ENCODE measurements at regions of chr1 and their contacts with region 1.

Region 1: DNA sequence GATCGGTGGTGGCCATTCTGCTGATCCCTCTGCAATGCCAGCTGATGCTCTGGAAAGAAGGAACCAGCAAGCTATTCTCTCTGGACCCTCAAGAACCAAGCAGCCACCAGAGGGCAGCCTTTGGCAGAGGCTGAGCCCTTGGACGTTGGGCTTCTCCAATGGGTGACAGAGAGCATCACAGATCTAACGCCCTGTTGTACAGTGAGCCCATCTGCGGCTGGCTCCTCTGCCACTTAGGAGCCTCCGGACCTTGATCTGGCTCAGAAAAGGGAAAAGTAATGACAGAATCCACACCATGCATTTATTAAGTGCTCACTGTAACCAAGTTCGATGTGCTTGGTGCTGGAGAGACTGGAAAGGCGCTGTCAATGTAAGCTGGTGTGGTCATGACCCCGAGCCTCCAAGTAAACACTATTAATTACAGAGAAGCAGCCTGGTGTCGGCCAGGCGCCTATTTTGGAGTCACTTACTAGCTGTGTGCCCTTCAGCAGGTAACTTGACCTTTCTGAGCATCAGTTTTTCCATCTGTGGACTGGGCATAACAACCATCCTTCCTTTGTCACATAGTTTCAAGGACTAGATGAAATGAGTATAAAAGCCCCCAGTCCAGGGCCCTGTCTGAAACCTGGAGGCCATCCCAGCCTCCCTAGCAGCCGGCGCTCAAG is 34.9 kb downstream of the ECE1 start:
- DNase-seq: peak; percentile 87
- H3K4me3 Mint-ChIP-seq: no peak overlapping the region
- H3K27ac Mint-ChIP-seq: no peak overlapping the region
- H3K4me1 Mint-ChIP-seq: peaks cover 12% of the 10 kb centered on the region
- H3K27me3 Mint-ChIP-seq: no peaks in the 10 kb centered on the region
- CTCF ChIP-seq: peak; percentile 89

Region 2: DNA sequence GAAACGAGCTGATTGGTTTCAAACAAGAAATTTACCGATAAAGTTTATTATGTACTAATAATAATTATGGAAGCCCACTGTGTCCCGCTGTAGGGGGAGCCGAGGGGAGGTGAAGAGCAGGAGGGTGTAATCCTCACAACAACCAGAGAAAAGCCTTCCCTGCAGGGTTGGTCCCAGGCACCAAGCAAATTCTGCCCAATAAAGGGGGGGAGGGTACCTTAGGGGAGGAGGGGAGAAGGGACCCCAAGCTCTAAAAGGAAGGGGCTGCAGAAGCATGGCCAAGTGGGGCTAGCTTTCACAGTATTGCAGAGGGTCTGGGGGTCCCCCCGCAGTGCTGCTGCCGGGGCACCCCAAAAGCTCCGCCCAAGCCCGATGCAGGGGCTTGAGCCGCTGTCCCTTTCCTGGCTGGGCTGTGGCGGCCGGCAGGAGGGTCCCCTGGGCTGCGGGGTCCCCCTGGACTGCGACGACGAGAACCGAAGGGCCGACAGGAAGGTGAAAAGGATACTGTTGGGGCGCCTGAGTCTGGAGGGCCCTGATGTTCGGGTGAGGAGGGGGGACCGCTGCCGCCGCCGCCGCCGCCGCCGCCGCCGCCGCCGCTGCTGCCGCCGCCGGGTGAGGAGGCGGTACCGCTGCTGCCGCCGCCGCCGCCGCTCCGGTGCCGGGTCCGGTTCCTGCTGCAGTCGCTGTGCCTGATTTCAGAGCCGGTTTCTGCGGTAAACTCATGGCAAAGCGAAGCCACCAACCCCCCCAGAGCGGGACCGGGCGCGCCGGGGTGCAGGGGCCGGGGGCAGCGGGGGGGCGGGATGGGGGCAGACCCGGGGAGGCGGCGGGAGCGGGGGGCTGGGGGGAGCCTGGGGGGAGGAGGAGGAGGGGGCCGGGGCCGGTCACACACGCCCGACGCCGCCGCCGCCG is 79.5 kb before region 1 on chr1:
- CTCF ChIA-PET with region 1: no interaction called
- POLR2A ChIA-PET with region 1: no interaction called
- intact Hi-C with region 1: no loop called
- DNase-seq: peak; percentile 25
- H3K4me3 Mint-ChIP-seq: peak overlapping the region; percentile 84
- H3K27ac Mint-ChIP-seq: peak overlapping the region; percentile 90
- H3K4me1 Mint-ChIP-seq: peaks cover 26% of the 10 kb centered on the region
- H3K27me3 Mint-ChIP-seq: no peaks in the 10 kb centered on the region
- CTCF ChIP-seq: no peak

Region 3: GRCh38 chr1:21232044-21232443 is 23.4 kb before region 1 on chr1:
- CTCF ChIA-PET with region 1: interaction called, 52 read pairs
- POLR2A ChIA-PET with region 1: interaction called, 6 read pairs
- intact Hi-C with region 1: loop called (anchors 1 kb)
- DNase-seq: peak; percentile 79
- H3K4me3 Mint-ChIP-seq: no peak overlapping the region
- H3K27ac Mint-ChIP-seq: no peak overlapping the region
- H3K4me1 Mint-ChIP-seq: no peaks in the 10 kb centered on the region
- H3K27me3 Mint-ChIP-seq: no peaks in the 10 kb centered on the region
- CTCF ChIP-seq: peak; percentile 77

Region 4: DNA sequence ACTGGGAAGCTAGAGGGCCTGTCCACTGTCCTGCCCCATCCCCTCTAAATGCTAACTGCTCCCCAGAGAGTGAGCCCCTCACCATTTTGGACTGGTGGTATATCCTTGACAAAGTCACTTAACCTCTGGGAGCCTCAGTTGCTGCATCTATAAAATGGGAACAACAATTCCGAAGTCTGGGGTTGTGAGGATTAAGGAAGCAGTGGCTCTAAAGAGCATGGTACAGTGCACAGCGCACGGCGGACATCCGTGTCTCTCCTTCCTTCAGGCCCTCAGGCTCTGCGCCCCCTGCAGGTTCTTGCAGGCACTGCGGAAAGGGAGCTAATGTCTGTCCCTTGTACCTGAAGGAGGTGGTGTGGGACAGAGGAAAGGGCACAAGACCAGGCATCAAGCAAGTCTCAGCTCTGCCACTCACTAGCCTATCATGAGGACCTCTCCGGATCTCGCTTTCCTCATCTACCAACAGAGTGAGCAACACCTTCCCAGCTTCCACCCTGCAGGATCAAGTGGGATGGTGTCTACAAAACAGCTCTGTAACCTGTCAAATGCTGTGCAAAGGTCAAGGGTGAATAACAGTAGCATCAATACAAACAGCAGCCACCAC is 14.8 kb after region 1 on chr1:
- CTCF ChIA-PET with region 1: interaction called, 16 read pairs
- POLR2A ChIA-PET with region 1: interaction called, 5 read pairs
- intact Hi-C with region 1: loop called (anchors 1 kb)
- DNase-seq: peak; percentile 71
- H3K4me3 Mint-ChIP-seq: no peak overlapping the region
- H3K27ac Mint-ChIP-seq: no peak overlapping the region
- H3K4me1 Mint-ChIP-seq: no peaks in the 10 kb centered on the region
- H3K27me3 Mint-ChIP-seq: no peaks in the 10 kb centered on the region
- CTCF ChIP-seq: peak; percentile 80

Region 5: DNA sequence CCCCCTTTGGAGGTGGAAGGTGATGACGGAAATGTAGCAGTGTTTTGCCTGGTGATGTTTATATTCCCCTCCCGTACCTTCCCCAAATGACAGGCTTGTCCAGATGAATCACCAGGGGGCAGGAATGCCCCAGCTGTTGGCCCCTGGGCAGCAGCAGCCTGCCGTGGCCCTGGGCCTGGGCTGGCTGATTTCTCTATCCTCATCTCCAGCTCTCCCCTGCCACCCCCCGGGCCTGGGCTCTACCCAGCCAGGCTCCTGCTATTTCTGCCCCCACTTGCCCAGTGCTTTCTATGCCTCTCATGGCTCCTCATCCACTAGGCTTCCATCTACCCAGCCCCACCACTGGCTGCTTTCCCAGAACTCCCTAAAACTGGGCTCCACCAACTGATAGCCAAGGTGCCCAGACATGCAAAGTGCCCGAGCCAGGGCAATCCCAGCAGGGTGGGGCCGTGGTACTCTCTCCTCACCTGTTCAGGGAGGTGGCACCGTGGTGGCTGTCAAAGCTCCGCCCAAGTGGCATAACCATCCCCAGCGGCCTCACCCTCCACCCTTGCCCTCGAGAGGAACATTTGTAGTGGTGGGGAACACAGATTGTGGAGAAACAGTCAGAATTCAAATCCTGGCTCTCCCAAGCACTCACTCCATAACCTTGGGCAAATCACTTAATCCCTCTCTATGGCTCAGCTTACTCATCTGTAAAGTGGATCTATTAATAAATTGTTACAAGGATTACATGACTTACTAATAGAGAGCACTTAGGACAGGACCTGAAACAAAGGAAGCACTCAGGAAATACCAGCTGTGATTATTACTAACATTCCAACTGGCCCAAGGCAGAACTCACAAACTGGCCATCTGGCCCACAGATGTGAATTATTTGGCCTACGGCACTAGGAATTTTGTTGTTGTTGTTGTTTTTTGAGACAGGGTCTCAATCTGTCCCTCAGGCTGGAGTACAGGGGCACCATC is 47.6 kb after region 1 on chr1:
- CTCF ChIA-PET with region 1: interaction called, 3 read pairs
- POLR2A ChIA-PET with region 1: no interaction called
- intact Hi-C with region 1: loop called (anchors 5 kb)
- DNase-seq: peak; percentile 53
- H3K4me3 Mint-ChIP-seq: peak overlapping the region; percentile 44
- H3K27ac Mint-ChIP-seq: peak overlapping the region; percentile 65
- H3K4me1 Mint-ChIP-seq: peaks cover 8% of the 10 kb centered on the region
- H3K27me3 Mint-ChIP-seq: no peaks in the 10 kb centered on the region
- CTCF ChIP-seq: peak; percentile 17

Region 6: GRCh38 chr1:21324368-21325141 is 69.1 kb after region 1 on chr1:
- CTCF ChIA-PET with region 1: interaction called, 17 read pairs
- POLR2A ChIA-PET with region 1: interaction called, 10 read pairs
- intact Hi-C with region 1: no loop called
- DNase-seq: peak; percentile 92
- H3K4me3 Mint-ChIP-seq: peak overlapping the region; percentile 28
- H3K27ac Mint-ChIP-seq: peak overlapping the region; percentile 90
- H3K4me1 Mint-ChIP-seq: peaks cover 57% of the 10 kb centered on the region
- H3K27me3 Mint-ChIP-seq: no peaks in the 10 kb centered on the region
- CTCF ChIP-seq: no peak

Region 7: GRCh38 chr1:21334214-21335087 is 79.0 kb after region 1 on chr1:
- CTCF ChIA-PET with region 1: interaction called, 24 read pairs
- POLR2A ChIA-PET with region 1: no interaction called
- intact Hi-C with region 1: loop called (anchors 1 kb)
- DNase-seq: peak; percentile 88
- H3K4me3 Mint-ChIP-seq: peak overlapping the region; percentile 68
- H3K27ac Mint-ChIP-seq: peak overlapping the region; percentile 93
- H3K4me1 Mint-ChIP-seq: peaks cover 44% of the 10 kb centered on the region
- H3K27me3 Mint-ChIP-seq: no peaks in the 10 kb centered on the region
- CTCF ChIP-seq: peak; percentile 83

Region 8: DNA sequence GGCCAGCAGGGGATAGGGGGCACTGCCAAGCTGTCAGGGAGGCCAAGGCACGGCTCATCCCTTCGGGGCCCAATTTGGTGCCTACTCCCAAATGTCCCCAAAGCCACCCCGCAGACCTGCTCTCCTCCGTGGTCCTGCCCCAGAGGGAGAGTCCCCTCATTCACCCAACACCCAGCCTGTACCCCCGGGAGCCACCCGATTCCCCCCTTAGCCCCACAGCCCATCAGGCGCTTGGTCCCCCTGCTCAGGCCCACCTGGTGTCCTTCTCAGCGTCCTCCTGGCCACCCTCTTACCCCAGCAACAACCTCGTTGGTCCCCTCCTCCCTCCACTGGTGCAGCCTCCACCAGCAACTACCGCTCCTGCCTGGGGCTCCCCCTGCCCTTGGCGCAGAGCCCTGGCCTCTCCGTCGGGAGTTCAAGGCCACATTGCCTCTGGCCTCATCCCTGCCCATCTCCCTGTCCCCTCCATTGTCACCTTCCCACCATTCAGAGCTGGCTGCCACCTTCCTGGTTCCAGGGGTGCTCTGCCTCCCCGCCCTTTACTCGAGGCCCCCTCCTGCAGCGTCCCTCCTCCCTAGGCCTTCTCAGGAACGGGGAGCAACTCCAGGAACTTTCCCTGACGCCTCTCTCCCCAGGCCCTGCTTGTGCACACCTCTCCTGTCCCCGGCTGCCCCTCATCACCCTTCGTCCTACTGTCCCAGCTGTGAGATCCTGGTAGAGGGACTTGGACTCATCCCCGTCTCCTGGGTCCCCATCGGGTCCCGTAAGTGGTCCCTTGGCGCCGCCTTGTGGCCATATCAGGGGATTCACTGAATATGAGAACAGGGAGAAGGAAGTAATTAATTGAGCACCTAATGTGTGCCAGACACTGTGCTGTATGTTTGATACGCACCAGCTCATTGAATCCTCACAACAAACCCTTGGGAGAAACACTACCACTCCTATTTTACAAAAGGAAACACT is 339.8 kb after region 1 on chr1:
- CTCF ChIA-PET with region 1: no interaction called
- POLR2A ChIA-PET with region 1: no interaction called
- intact Hi-C with region 1: loop called (anchors 10 kb)
- DNase-seq: peak; percentile 74
- H3K4me3 Mint-ChIP-seq: no peak overlapping the region
- H3K27ac Mint-ChIP-seq: no peak overlapping the region
- H3K4me1 Mint-ChIP-seq: peaks cover 5% of the 10 kb centered on the region
- H3K27me3 Mint-ChIP-seq: peaks cover 20% of the 10 kb centered on the region
- CTCF ChIP-seq: peak; percentile 83

Measured in MCF 10A (cell line).